ENCODE measurements at regions of chr10 and their contacts with region 1.

Region 1: GRCh38 chr10:72254813-72255568 is 18.7 kb upstream of the DDIT4 start:
- DNase-seq: peak in 1 of 2 experiments; percentile 80
- H3K4me3 ChIP-seq: peak overlapping the region in 1 of 4 experiments; percentile 17; a peak in 1 of 8 replicates
- H3K27ac ChIP-seq: peak overlapping the region; percentile 42; the same call in 1 of the 2 replicates
- H3K4me1 ChIP-seq: peaks cover 5 to 16% (median 13%) of the 10 kb centered on the region in 4 experiments
- H3K27me3 ChIP-seq: no peaks in the 10 kb centered on the region
- CTCF ChIP-seq: no peak
- EP300 ChIP-seq: no peak
- POLR2A ChIP-seq: 0 out of 3 replicates have a peak, but pooled peaks of 1 of the 2 experiments have one; percentile 45
- RAD21 ChIP-seq: peak; percentile 31 to 36; a peak in 3 of 4 replicates

Region 2: DNA sequence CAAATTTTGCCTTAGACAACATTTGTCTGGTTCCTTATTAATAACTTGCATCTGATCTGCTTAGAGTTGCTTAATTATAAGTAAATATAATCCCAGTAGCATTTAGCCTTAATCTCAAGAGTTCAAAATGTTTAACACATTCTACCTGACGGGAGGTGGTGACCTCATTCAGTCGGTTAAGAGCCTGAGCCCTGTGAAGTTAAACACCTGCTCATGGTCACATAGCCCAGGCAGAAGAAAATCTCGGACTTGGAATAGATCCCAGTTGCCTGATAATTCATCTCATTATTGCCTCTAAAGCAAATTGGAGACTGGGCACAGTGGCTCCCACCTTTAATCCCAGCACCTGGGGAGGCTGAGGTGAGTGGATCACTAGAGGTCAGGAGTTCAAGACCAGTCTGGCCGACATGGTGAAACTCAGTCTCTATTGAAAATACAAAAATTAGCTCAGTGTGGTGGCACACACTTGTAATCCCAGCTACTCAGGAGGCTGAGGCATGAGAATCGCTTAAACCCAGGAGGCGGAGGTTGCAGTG is 20.4 kb before region 1 on chr10:
- CTCF ChIA-PET with region 1: interaction called, 6 read pairs
- POLR2A ChIA-PET with region 1: interaction called, 35 read pairs
- DNase-seq: no peak
- H3K4me3 ChIP-seq: no peak overlapping the region
- H3K27ac ChIP-seq: no peak overlapping the region
- H3K4me1 ChIP-seq: peaks cover 0 to under 1% (median 0%) of the 10 kb centered on the region in 4 experiments; a peak in 2 of 7 replicates
- H3K27me3 ChIP-seq: no peaks in the 10 kb centered on the region
- CTCF ChIP-seq: no peak
- EP300 ChIP-seq: no peak
- POLR2A ChIP-seq: no peak
- RAD21 ChIP-seq: no peak

Measured in H1 (cell line).